ENCODE measurements at regions of chr14 and their contacts with region 1.

Region 1: DNA sequence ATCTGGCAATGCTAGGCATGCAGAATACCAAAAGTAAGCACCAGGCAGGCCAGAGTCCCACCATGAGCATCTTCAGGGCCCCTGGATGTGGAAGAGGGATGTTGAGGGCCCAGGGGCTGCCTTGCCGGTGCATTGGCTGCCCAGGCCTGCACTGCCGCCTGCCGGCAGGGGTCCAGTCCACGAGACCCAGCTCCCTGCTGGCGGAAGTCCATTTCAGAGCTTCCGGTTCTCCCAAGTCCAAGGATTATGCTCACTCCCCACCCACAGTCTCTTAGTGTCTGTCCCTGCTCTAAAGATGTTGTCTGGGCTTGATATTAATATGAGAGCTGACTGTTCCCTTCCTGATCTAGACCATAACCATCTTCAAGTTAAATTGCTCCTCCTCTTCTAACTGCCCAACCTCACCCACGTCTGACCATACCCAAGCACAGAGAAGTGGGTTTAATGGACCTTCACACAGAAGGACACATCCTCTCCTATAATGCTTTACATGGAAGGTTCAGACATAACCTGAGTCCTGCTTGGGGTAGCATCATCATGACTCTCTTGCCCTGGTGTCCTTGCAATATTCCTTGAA is 117.4 kb downstream of the DAD1 start:
- DNase-seq: peak; percentile 53
- H3K4me3 ChIP-seq: no peak overlapping the region
- H3K27ac ChIP-seq: no peak overlapping the region
- H3K4me1 ChIP-seq: no peaks in the 10 kb centered on the region
- H3K27me3 ChIP-seq: no peaks in the 10 kb centered on the region
- CTCF ChIP-seq: peak; percentile 34

Region 2: DNA sequence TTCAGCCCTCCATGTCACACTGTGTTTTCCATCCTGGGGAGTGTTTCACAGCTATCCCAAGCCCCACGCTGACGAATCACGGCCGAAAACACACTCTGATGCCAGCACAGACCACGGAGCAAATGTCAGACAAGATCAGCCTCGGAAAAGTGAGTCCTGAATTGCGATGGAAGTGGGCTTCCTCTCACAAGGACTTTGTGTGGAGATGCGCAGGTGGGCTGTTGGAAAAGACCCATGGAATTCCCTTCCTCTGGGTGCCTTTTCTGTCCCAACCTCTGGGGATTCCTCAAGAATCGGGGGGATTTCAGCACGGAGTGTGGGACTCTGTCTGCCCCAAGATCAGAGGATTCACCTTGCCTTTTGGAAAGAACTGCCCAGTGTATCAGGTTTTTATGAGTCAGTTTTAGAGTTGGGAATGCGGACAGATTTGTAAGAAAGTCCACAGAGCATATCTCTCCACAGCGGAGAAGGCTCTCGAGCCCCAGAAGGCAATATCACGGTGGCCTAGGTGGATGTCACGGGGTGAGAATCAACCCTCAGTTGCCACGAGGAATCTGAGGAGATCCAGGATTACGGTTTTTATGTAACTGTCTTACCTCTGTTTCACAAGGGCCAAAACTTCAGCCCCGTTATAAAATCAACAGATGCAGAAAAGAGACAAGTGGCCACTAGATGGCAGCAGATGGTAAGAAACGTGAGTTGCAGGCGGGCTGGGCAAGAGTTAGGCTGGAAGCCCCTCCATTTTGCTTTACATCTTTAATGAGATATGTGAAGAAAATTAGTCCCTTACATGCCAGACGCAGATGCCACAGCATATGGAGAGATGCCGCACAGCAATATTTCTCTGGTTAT is 84.5 kb before region 1 on chr14:
- intact Hi-C with region 1: loop called (anchors 2 kb)
- DNase-seq: peak; percentile 81
- H3K4me3 ChIP-seq: no peak overlapping the region
- H3K27ac ChIP-seq: no peak overlapping the region
- H3K4me1 ChIP-seq: no peaks in the 10 kb centered on the region
- H3K27me3 ChIP-seq: no peaks in the 10 kb centered on the region
- CTCF ChIP-seq: peak; percentile 75